Spleen (tissue), 13 donors: ENCODE measurements at regions of chr1 and their contacts with region 1.

Region 1: DNA sequence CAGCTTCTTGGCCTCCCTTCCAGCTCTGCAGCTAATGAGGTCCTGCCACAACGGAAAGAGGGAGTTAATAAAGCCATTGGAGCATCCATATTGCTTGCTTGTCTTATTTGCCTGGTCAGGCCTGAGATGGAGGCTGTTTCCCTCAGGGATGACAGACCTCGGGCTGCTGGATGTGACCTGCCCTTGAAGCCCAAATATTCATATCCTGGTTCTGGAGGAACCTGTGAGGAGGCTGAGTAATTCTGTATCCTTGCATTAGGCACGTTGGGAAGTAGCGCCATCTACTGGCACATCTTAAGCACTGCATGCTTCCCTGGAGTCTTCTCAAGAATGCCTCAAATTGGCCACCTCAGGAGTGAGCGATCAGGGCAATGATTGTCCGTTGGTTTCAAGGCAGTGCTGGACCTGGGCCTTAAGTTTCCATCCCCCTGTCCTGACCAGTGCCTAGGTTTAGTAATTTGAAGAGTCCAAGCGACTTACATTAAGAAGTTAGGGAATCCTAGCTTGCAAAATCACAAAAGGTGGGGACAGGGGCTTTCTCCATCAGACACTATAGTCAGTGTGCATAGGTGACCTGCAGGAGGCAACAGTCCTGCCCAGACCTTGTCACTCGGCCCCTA is 13.8 kb upstream of the NASP start:
- DNase-seq: peak; percentile 82
- H3K4me3 ChIP-seq: no peak overlapping the region
- H3K27ac ChIP-seq: peak overlapping the region in 2 of 8 donors; percentile 22 to 53
- H3K4me1 ChIP-seq: peaks cover 0 to 14% (median 4%) of the 10 kb centered on the region in 6 donors
- H3K27me3 ChIP-seq: no peaks in the 10 kb centered on the region
- CTCF ChIP-seq: peak; percentile 96 to 99 (median 98)
- POLR2A ChIP-seq: no peak

Region 2: GRCh38 chr1:45359882-45360513 is 210.1 kb before region 1 on chr1:
- intact Hi-C with region 1: loop called (anchors 10 kb)
- DNase-seq: no peak
- H3K4me3 ChIP-seq: peak overlapping the region in 1 of 8 donors; percentile 25
- H3K27ac ChIP-seq: peak overlapping the region; percentile 55 to 81 (median 74)
- H3K4me1 ChIP-seq: peaks cover 14 to 24% (median 20%) of the 10 kb centered on the region in 6 donors
- H3K27me3 ChIP-seq: no peaks in the 10 kb centered on the region
- CTCF ChIP-seq: peak; percentile 33 to 76 (median 64)
- POLR2A ChIP-seq: no peak

Region 3: DNA sequence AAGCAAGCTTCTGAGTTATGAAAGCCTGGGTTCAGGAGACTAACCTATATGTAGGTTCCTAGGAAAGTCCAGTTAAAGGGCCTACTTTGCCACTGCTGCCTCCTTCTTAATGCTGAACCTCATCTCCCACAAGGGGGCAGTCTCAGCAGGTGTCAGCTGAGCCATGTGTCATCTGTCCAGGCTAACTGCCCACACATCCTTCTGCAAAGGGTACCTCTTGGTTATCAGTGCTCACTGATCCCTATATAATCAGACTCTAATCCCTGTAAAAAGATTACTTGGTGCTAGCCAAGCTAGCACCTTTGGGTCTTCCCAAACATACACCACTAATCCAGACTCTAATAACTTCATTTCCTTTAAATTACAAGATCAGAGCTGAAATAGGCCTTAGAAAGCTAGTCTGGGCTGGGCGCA is 57.4 kb before region 1 on chr1:
- intact Hi-C with region 1: loop called (anchors 5 kb)
- DNase-seq: no peak
- H3K4me3 ChIP-seq: no peak overlapping the region
- H3K27ac ChIP-seq: no peak overlapping the region
- H3K4me1 ChIP-seq: peaks cover 0 to 9% (median 0%) of the 10 kb centered on the region in 6 donors
- H3K27me3 ChIP-seq: no peaks in the 10 kb centered on the region
- CTCF ChIP-seq: peak; percentile 34 to 82 (median 63)
- POLR2A ChIP-seq: no peak